Transverse colon (tissue), 4 donors: ENCODE measurements at regions of chr9 and their contacts with region 1.

Region 1: GRCh38 chr9:72871685-72872084 is 81.2 kb downstream of the ALDH1A1 start:
- DNase-seq: no peak
- H3K4me3 ChIP-seq: no peak overlapping the region
- H3K27ac ChIP-seq: peak overlapping the region; percentile 1 to 57 (median 26)
- H3K4me1 ChIP-seq: peaks cover 6 to 23% (median 15%) of the 10 kb centered on the region in 4 donors
- H3K27me3 ChIP-seq: no peaks in the 10 kb centered on the region
- CTCF ChIP-seq: peak; percentile 43 to 68 (median 52)
- EP300 ChIP-seq: no peak
- POLR2A ChIP-seq: no peak

Region 2: DNA sequence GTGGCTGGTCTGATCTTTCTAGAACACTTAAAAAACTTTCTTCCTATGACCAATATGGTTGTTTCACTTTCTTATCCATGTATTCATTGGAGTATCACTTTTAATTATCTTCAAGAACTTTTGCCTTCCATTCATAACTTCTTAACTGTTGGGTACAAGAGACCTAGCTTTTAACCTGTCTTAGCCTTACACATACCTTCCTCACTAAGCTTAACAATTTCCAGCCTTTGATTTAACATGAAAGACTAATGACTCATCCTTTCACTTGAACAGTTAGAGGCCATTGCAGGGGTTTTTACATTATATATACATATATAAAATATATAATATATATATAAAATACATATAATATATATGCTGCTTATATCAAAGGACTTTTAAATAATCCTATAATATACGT is 1018.6 kb before region 1 on chr9:
- in situ Hi-C with region 1: no loop called
- intact Hi-C with region 1: no loop called
- DNase-seq: no peak
- H3K4me3 ChIP-seq: no peak overlapping the region
- H3K27ac ChIP-seq: no peak overlapping the region
- H3K4me1 ChIP-seq: no peaks in the 10 kb centered on the region
- H3K27me3 ChIP-seq: no peaks in the 10 kb centered on the region
- CTCF ChIP-seq: no peak
- EP300 ChIP-seq: no peak
- POLR2A ChIP-seq: no peak

Region 3: DNA sequence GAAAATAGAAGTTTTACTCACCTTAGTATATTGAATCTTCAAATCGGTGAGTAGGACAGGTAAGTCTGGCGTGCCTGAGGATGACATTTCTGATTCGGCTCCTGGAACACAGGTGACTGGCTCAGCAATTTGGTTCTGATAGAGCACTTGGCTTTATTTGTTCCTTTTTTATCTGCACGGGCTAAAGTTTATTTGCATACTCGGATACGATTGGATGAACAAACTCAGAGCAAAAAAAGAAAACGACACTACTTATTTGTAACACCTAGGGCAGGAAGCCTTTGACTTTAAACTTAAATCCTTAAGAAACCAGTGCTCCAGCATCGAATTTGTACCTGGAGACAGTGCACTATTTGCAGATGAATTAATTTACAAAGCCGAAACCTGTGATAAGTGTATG is 81.2 kb after region 1 on chr9 and contains the start of gene ALDH1A1:
- in situ Hi-C with region 1: no loop called
- intact Hi-C with region 1: loop called (anchors 2 kb)
- DNase-seq: peak; percentile 64
- H3K4me3 ChIP-seq: peak within 1 kb of the TSS; percentile 27 to 57 (median 40)
- H3K27ac ChIP-seq: peak within 1 kb of the TSS; percentile 69 to 85 (median 83)
- H3K4me1 ChIP-seq: peaks cover 11 to 62% (median 40%) of the 10 kb centered on the region in 4 donors
- H3K27me3 ChIP-seq: no peaks in the 10 kb centered on the region
- CTCF ChIP-seq: no peak
- EP300 ChIP-seq: no peak
- POLR2A ChIP-seq: peak; percentile 72
- total RNA-seq, gene ALDH1A1: 76.3 to 566 (median 288) TPM

Region 4: DNA sequence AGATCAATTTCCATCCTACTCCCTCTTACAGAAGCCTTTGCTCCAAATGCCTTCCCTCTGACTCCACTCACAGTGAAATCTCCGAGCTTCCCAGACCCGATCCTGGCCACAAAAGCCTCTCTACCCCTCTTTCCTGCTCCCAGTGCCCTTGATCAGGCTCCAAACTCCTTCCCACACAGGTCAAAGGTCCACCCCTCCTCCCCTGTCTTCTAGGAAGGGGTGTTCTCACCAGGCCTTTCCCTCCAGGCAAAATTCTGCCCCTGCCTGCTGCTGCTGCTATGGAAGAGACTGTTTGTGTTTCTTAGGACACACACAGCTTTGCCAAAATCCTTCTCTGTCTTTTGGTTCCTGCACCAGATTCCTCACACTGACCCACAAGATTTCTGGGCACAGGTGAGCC is 166.9 kb after region 1 on chr9:
- in situ Hi-C with region 1: no loop called
- intact Hi-C with region 1: loop called (anchors 5 kb)
- DNase-seq: peak; percentile 42
- H3K4me3 ChIP-seq: no peak overlapping the region
- H3K27ac ChIP-seq: peak overlapping the region; percentile 73 to 88 (median 76)
- H3K4me1 ChIP-seq: peaks cover 0 to 28% (median 14%) of the 10 kb centered on the region in 4 donors
- H3K27me3 ChIP-seq: no peaks in the 10 kb centered on the region
- CTCF ChIP-seq: no peak
- EP300 ChIP-seq: no peak
- POLR2A ChIP-seq: no peak